ENCODE measurements at regions of chr7 and their contacts with region 1.

Region 1: DNA sequence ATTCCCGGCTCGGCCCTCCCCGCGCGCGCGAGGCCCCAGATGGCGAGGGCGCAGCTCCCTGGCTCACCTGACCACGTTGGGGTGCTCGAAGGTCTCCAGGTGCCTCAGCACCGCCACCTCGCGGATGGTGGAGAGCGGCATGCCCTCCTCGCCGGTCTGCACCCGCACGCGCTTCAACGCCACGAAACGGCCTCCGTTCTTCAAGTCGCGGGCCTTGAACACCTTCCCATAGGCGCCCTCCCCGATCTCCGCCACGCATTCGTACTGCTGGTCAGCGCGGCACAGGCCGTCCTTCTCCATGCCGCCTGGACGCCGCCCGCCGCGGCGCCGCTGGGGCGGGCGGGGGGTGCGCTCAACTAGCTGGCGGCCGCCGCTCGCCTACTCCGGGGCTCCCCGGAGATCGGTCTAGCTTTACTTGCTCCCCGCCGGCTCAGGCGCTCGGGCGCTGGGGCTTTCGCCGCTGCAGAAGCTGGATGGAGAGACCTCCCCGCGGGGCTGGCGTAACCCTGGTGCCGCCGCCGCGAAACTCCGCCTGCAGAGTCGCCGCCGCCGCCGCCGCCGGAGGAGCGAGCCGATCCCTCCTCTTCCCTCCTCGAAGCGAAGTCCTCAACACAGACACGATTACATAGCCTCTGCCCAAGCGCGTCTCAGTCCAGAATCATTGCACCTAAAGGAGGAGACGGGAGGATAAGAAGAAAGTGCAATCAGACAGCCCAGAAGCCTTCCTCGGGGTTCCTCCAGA is 3.2 kb downstream of the CDK6 start:
- DNase-seq: peak; percentile 95
- ATAC-seq: peak; percentile 64
- H3K4me3 Mint-ChIP-seq: peak overlapping the region; percentile 96
- H3K27ac Mint-ChIP-seq: peak overlapping the region; percentile 95
- H3K4me1 Mint-ChIP-seq: peaks cover 35% of the 10 kb centered on the region
- H3K27me3 Mint-ChIP-seq: no peaks in the 10 kb centered on the region

Region 2: DNA sequence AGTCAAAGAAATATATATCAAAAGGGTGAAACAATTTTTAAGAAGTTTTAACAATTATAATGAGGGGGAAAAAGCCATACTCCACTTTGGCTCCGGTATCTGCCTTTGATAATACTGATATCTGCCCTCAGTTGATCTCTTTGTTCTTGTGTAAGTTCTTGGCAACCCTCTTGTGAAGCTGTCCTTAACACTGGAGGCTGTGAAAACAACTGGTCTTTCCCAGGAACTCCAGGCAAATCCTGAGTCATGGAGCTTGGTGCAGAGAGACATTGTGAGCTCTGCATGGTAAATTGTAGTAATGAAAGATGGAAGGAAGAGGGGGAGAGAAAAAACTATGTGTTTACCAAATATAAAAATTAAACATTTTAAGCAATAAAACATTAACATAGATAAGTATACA is 343.6 kb before region 1 on chr7:
- CTCF ChIA-PET with region 1: no interaction called
- POLR2A ChIA-PET with region 1: no interaction called
- intact Hi-C with region 1: no loop called
- DNase-seq: no peak
- ATAC-seq: no peak
- H3K4me3 Mint-ChIP-seq: no peak overlapping the region
- H3K27ac Mint-ChIP-seq: no peak overlapping the region
- H3K4me1 Mint-ChIP-seq: no peaks in the 10 kb centered on the region
- H3K27me3 Mint-ChIP-seq: no peaks in the 10 kb centered on the region

Region 3: DNA sequence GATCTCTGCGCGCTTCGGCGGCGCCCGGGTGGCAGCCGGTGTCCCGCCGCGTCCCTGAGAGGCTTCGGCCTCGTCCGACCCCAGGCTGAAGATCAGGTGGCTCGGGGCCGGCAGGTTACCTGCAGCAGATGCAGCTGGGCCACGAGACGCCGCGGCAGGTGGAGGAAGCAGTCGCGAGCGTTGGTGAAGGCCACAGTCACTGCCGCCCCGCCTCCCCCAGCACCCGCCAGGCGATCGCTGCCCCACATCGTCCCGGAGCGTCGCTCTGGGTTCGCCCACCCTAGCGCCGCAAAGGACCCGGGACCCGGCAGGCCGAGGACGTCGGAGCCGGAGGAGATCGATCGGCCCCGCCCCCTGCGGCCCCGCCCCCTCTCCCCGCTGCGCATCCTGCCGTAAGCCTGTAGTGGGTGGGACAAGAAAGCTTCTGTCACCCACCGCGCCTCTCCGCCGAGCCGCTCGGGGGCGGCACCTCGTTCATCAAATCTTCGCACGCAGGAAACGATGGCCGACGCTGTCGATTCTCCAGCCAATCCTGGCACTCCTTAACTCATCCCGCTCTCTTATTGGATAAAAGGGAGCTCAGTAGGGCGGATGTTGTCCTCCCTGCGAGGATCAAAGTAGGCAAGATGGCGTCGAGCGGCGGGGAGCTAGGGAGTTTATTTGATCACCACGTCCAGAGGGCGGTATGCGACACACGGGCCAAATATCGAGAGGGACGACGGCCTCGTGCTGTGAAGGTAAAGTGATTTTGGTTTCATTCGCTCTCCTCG is 304.8 kb before region 1 on chr7 and contains the starts of genes PEX1 and RBM48:
- CTCF ChIA-PET with region 1: interaction called, 4 read pairs
- POLR2A ChIA-PET with region 1: no interaction called
- intact Hi-C with region 1: loop called (anchors 1 to 5 kb)
- DNase-seq: peak; percentile 98
- ATAC-seq: peak; percentile 95
- H3K4me3 Mint-ChIP-seq: peak within 1 kb of the TSS; percentile 90
- H3K27ac Mint-ChIP-seq: peak within 1 kb of the TSS; percentile 93
- H3K4me1 Mint-ChIP-seq: peaks cover 29% of the 10 kb centered on the region
- H3K27me3 Mint-ChIP-seq: no peaks in the 10 kb centered on the region
- total RNA-seq, gene PEX1: 14.7 to 16.0 TPM
- total RNA-seq, gene RBM48: 12.8 to 13.1 TPM

Region 4: GRCh38 chr7:92633211-92633906 is 199.8 kb before region 1 on chr7:
- CTCF ChIA-PET with region 1: interaction called, 17 read pairs
- POLR2A ChIA-PET with region 1: interaction called, 11 read pairs
- intact Hi-C with region 1: loop called (anchors 2 kb)
- DNase-seq: peak; percentile 46
- ATAC-seq: peak; percentile 34
- H3K4me3 Mint-ChIP-seq: peak overlapping the region; percentile 48
- H3K27ac Mint-ChIP-seq: peak overlapping the region; percentile 89
- H3K4me1 Mint-ChIP-seq: peaks cover 82% of the 10 kb centered on the region
- H3K27me3 Mint-ChIP-seq: no peaks in the 10 kb centered on the region

Region 5: GRCh38 chr7:92731335-92732063 is 101.7 kb before region 1 on chr7:
- CTCF ChIA-PET with region 1: interaction called, 6 read pairs
- POLR2A ChIA-PET with region 1: interaction called, 9 read pairs
- intact Hi-C with region 1: loop called in 1 of 2 experiments (anchors 1 kb)
- DNase-seq: peak; percentile 68
- ATAC-seq: peak; percentile 72
- H3K4me3 Mint-ChIP-seq: peak overlapping the region; percentile 21
- H3K27ac Mint-ChIP-seq: peak overlapping the region; percentile 88
- H3K4me1 Mint-ChIP-seq: peaks cover 61% of the 10 kb centered on the region
- H3K27me3 Mint-ChIP-seq: no peaks in the 10 kb centered on the region

Region 6: DNA sequence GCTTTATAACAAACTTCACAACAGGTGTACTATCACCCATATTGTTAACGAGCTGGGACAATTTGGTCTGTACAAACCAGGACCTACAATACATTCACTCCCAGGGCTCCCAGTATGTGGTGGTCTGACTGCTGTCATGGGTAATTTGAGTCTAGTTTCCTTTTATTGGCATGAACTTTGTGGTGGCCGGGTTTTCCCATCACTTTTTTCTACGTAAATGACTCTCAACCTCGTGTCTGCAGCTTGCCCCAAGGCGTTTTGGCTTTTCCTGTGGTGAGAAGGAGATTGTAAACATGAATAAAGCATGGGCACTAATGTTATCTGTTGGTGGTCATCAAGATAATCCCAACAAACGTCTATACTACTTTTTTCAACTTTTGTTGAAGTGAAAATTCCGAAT is 121.9 kb after region 1 on chr7:
- CTCF ChIA-PET with region 1: no interaction called
- POLR2A ChIA-PET with region 1: no interaction called
- intact Hi-C with region 1: loop called in 1 of 2 experiments (anchors 5 kb)
- DNase-seq: peak; percentile 61
- ATAC-seq: peak; percentile 65
- H3K4me3 Mint-ChIP-seq: no peak overlapping the region
- H3K27ac Mint-ChIP-seq: peak overlapping the region; percentile 64
- H3K4me1 Mint-ChIP-seq: peaks cover 30% of the 10 kb centered on the region
- H3K27me3 Mint-ChIP-seq: peaks cover 20% of the 10 kb centered on the region

Region 7: DNA sequence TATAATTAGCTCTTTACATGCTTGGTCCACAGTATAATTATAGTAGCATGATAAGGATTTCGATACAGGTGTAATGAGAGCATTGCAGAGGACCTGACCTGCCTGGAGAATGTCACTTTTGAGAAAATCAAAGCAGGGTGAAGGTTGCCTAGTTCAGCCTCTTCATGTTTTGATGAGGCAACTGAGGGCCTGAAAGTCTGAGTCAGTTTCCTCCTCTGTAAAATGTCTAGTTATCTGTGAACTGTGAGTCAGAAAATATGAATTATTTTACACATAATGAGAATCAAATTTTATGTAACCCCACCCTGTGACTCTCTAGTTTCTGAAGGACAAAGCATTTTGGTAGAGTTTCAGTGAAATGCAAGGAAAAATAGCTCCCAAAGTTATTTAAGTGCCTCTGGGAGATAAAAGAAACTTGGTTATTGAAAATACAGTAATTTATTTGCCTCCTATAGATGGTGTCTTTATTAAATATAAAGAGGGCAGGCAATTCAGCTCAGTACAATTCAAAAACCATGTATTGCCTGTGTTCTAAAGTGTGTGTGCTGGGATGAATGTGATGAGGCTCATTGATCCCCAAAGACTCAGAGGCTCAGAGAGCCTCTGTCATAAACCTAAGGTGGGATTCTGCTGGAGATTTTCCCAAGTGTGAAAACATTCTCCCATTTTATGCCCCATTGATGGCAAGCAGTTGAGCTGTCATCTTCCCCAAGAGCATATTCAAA is 352.3 kb after region 1 on chr7:
- CTCF ChIA-PET with region 1: no interaction called
- POLR2A ChIA-PET with region 1: no interaction called
- intact Hi-C with region 1: no loop called
- DNase-seq: peak; percentile 39
- ATAC-seq: peak; percentile 98
- H3K4me3 Mint-ChIP-seq: no peak overlapping the region
- H3K27ac Mint-ChIP-seq: no peak overlapping the region
- H3K4me1 Mint-ChIP-seq: peaks cover 11% of the 10 kb centered on the region
- H3K27me3 Mint-ChIP-seq: peaks cover 44% of the 10 kb centered on the region

Region 8: DNA sequence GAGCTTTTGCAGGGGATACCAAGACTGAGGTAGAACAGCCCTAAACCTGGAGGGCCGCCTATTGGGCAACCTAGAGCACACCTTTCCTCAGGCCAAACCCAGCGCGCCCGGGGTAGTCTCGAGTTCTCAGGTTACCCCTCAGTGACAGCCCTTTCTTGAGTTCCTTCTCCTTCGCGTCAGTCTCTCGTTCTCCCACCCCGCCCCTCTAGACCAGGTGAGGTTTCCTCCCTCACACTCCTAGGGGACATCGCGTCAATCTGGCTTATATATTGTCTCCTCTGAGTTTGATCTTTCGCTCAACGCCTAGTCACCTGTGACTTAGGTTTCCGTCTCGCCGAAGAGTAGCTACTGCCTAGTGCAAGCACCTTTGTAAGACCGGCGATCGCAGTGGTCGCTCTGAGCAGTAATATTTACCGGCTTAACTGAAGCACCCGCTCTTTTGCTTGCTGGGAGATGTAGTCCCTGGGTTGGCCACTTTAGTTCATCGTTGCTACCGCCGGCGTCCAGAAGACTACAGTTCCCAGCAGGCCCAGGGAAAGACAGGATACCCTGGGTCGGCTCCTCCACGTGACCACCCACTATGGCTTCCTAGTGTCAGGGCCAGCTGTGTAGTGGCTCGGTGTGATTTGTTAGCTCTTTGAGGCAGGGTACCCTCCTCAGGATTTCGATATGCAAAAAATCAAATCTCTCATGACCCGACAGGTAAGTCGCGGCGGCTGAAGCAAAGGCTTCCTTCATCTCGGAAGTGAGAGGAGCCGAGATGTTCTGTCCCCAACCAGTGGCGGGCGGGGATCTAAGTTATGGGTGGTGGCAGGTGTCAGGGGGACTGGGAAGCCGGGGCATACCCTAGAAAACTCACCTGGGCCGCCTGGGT is 398.8 kb after region 1 on chr7 and contains the start of gene VPS50:
- CTCF ChIA-PET with region 1: no interaction called
- POLR2A ChIA-PET with region 1: no interaction called
- intact Hi-C with region 1: loop called (anchors 5 to 10 kb)
- DNase-seq: peak; percentile 96
- ATAC-seq: peak; percentile 99
- H3K4me3 Mint-ChIP-seq: peak within 1 kb of the TSS; percentile 85
- H3K27ac Mint-ChIP-seq: peak within 1 kb of the TSS; percentile 88
- H3K4me1 Mint-ChIP-seq: peaks cover 10% of the 10 kb centered on the region
- H3K27me3 Mint-ChIP-seq: no peaks in the 10 kb centered on the region
- total RNA-seq, gene VPS50: 12.8 to 14.7 TPM